ENCODE measurements at regions of chr12 and their contacts with region 1.

Region 1: DNA sequence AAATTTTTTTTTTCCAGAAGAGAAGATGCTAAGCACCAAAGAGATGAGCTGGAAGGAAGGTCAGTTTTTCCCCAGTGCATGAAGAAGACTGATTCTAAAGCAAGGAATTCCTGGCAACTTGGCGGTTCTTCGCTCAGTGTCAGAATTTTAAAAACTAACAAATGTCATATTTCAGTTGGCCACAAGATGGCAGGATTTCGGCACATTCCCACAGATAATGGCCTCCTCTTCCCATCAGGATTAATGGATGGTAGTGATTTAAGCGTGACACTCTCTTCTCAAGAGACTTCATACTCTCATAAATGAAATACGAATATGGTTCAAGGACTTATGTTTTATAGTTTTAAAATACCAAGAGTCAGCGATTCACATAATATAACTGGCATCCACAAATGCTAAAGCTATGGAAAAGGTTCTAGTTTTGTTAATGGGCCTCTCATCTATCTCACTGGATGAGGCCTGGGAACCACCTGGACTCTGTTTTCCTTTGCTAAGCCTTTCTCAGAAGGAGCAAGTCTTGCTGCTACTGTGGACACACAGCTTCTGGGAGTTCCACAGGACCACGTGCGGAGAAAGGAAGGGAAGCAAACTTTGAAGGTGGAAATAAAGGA is 46.1 kb upstream of the PTPRO start:
- DNase-seq: peak; percentile 48
- H3K4me3 ChIP-seq: no peak overlapping the region
- H3K27ac ChIP-seq: peak overlapping the region; percentile 88
- H3K4me1 ChIP-seq: peaks cover 54% of the 10 kb centered on the region
- H3K27me3 ChIP-seq: no peaks in the 10 kb centered on the region
- CTCF ChIP-seq: peak; percentile 55 to 58

Region 2: DNA sequence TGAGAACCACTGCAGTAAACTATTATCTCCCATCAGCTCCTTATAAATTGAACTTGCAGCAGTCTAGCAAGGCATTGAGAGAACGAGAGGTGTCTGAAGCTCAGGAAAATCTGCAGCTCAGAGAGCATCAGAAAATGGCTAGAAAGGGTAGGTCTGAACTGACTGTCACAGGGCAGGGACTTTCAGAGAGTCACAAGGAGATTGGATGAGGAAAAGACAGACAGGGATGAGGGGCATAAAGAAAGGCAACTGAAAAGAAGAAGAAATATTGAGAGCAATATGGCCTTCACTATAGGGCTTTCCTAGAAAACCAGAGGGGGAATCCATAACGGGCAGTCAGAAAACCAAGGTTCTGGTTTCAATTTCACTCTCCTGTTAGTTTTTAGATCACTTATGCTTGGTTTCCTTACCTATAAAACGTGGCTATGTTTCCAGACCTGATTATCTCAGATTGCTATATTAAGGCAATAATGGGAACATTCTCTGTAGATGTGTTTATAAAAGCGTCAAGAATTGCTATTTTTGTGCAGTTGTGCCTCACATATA is 262.5 kb before region 1 on chr12:
- CTCF ChIA-PET with region 1: no interaction called
- dilution Hi-C with region 1: no loop called
- in situ Hi-C with region 1: no loop called
- intact Hi-C with region 1: no loop called
- DNase-seq: no peak
- H3K4me3 ChIP-seq: no peak overlapping the region
- H3K27ac ChIP-seq: no peak overlapping the region
- H3K4me1 ChIP-seq: no peaks in the 10 kb centered on the region
- H3K27me3 ChIP-seq: peaks cover 9% of the 10 kb centered on the region
- CTCF ChIP-seq: no peak

Region 3: DNA sequence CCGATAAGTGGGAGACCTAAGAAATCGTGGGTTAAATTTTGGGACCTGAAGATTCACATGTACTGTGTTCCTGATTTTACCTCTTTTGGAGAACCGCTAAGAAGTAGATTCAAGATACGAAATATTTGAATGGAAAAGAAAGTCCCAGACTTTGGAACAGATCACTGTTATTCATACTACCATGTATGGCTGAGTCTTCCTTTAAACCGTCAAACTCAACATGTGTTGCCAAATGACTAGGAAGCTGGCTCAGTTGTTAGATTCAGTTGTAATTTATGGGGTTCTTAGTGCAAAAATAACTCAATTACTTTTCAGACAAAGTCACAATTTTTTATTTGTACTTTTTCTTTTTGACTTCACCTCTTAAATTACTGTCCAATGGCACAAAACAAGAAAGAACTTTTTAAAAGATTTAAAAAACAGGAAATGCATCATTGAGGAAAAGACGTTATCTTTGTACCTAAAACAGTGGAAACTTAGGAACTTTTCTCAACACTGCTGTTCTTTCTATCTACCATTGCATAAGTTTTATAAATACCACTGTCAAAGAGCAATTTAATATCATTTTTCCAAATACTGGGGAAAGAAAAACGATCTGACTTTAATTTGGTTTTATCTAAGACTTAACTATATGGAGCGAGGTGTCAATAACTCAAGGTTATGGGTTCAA is 70.7 kb before region 1 on chr12:
- CTCF ChIA-PET with region 1: no interaction called
- dilution Hi-C with region 1: no loop called
- in situ Hi-C with region 1: no loop called
- intact Hi-C with region 1: no loop called
- DNase-seq: peak; percentile 46
- H3K4me3 ChIP-seq: no peak overlapping the region
- H3K27ac ChIP-seq: no peak overlapping the region
- H3K4me1 ChIP-seq: peaks cover 13% of the 10 kb centered on the region
- H3K27me3 ChIP-seq: no peaks in the 10 kb centered on the region
- CTCF ChIP-seq: no peak

Region 4: GRCh38 chr12:15322164-15323061 is 46.2 kb after region 1 on chr12 and contains the start of gene PTPRO:
- CTCF ChIA-PET with region 1: no interaction called
- dilution Hi-C with region 1: no loop called
- in situ Hi-C with region 1: no loop called
- intact Hi-C with region 1: no loop called
- DNase-seq: peak; percentile 23
- H3K4me3 ChIP-seq: peak within 1 kb of the TSS; percentile 4 to 56 (median 24)
- H3K27ac ChIP-seq: no peak within 1 kb of the TSS
- H3K4me1 ChIP-seq: peaks cover 10% of the 10 kb centered on the region
- H3K27me3 ChIP-seq: peaks cover 8% of the 10 kb centered on the region
- CTCF ChIP-seq: no peak
- total RNA-seq, gene PTPRO: 0.21 TPM in 1 of 2 donors, not detected in the other

Region 5: DNA sequence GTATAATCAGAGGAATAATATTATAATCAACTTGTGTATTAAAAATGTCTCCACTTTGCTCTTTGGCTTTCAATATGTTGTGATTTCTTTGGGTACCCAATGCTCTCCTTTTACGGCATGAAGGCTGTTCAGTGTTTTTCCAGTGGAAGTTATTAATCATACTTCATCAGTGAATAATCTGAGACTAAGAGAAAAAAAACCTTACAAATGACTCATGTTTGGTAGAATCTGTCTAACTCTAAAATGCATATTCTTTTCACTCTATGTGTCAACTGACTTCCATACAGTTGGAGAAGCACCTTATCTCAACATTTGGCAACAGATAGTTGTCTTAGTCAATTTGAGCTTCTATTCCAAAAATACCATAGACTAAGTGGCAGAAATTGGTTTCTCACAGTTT is 128.3 kb after region 1 on chr12:
- CTCF ChIA-PET with region 1: no interaction called
- dilution Hi-C with region 1: no loop called
- in situ Hi-C with region 1: no loop called
- intact Hi-C with region 1: loop called (anchors 5 kb)
- DNase-seq: peak; percentile 60
- H3K4me3 ChIP-seq: no peak overlapping the region
- H3K27ac ChIP-seq: no peak overlapping the region
- H3K4me1 ChIP-seq: peaks cover 4% of the 10 kb centered on the region
- H3K27me3 ChIP-seq: no peaks in the 10 kb centered on the region
- CTCF ChIP-seq: no peak

Region 6: GRCh38 chr12:15584366-15585041 is 308.3 kb after region 1 on chr12:
- CTCF ChIA-PET with region 1: interaction called, 5 read pairs
- dilution Hi-C with region 1: no loop called
- in situ Hi-C with region 1: no loop called
- intact Hi-C with region 1: loop called (anchors 5 kb)
- DNase-seq: no peak
- H3K4me3 ChIP-seq: no peak overlapping the region
- H3K27ac ChIP-seq: no peak overlapping the region
- H3K4me1 ChIP-seq: no peaks in the 10 kb centered on the region
- H3K27me3 ChIP-seq: peaks cover under 1% of the 10 kb centered on the region
- CTCF ChIP-seq: peak; percentile 73 to 84

Region 7: GRCh38 chr12:15752785-15753184 is 476.6 kb after region 1 on chr12:
- CTCF ChIA-PET with region 1: no interaction called
- dilution Hi-C with region 1: no loop called
- in situ Hi-C with region 1: no loop called
- intact Hi-C with region 1: no loop called
- DNase-seq: no peak
- H3K4me3 ChIP-seq: no peak overlapping the region
- H3K27ac ChIP-seq: no peak overlapping the region
- H3K4me1 ChIP-seq: peaks cover 10% of the 10 kb centered on the region
- H3K27me3 ChIP-seq: no peaks in the 10 kb centered on the region
- CTCF ChIP-seq: no peak

Measured in mammary epithelial cell (primary cell).